OCI-LY7 (cell line): ENCODE measurements at regions of chr12 and their contacts with region 1.

Region 1: GRCh38 chr12:6825398-6826124 is 2.6 kb upstream of the P3H3 start:
- DNase-seq: peak; percentile 71
- H3K4me3 ChIP-seq: no peak overlapping the region
- H3K27ac ChIP-seq: no peak overlapping the region
- H3K4me1 ChIP-seq: peaks cover 32% of the 10 kb centered on the region
- CTCF ChIP-seq: peak; percentile 91

Region 2: GRCh38 chr12:6554168-6555017 is 271.2 kb before region 1 on chr12:
- CTCF ChIA-PET with region 1: no interaction called
- POLR2A ChIA-PET with region 1: no interaction called
- intact Hi-C with region 1: loop called (anchors 5 kb)
- DNase-seq: peak; percentile 91
- H3K4me3 ChIP-seq: peak overlapping the region; percentile 92
- H3K27ac ChIP-seq: peak overlapping the region; percentile 49
- H3K4me1 ChIP-seq: peaks cover 40% of the 10 kb centered on the region
- CTCF ChIP-seq: peak; percentile 81

Region 3: GRCh38 chr12:6752921-6753771 is 72.4 kb before region 1 on chr12 and contains the start of gene MLF2:
- CTCF ChIA-PET with region 1: no interaction called
- POLR2A ChIA-PET with region 1: interaction called, 5 read pairs
- intact Hi-C with region 1: loop called (anchors 1 kb)
- DNase-seq: peak; percentile 97
- H3K4me3 ChIP-seq: peak within 1 kb of the TSS; percentile 89
- H3K27ac ChIP-seq: peak within 1 kb of the TSS; percentile 73
- H3K4me1 ChIP-seq: peaks cover 17% of the 10 kb centered on the region
- CTCF ChIP-seq: no peak
- total RNA-seq, gene MLF2: 87.3 and 96.2 TPM in 2 replicates